ENCODE measurements at regions of chr20 and their contacts with region 1.

Region 1: GRCh38 chr20:17504898-17505635 is 26.1 kb downstream of the BFSP1 start:
- DNase-seq: peak; percentile 71
- H3K4me3 Mint-ChIP-seq: peak overlapping the region; percentile 81
- H3K27ac Mint-ChIP-seq: peak overlapping the region; percentile 86
- H3K4me1 Mint-ChIP-seq: peaks cover 71% of the 10 kb centered on the region
- H3K27me3 Mint-ChIP-seq: peaks cover 4% of the 10 kb centered on the region

Region 2: DNA sequence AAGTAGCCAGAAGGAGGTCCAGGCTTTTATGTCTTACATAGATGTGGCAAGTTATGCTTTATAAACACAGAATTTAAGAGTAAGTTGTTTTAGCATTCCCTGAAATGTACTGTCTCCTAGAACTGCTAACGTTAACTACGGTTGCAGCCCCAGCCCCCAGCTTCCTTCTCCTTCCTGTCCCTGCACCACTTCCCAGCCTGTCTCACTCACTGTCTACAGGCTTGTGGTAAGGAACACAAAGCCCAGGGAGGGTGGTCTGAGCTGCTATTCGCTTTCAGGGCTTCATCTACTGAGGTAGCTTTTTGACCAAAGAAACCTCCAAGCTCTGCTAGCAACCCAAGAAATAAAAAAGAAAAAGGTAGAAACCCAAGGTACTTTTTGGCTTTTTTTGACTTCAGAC is 242.3 kb before region 1 on chr20:
- intact Hi-C with region 1: no loop called
- DNase-seq: no peak
- H3K4me3 Mint-ChIP-seq: no peak overlapping the region
- H3K27ac Mint-ChIP-seq: no peak overlapping the region
- H3K4me1 Mint-ChIP-seq: no peaks in the 10 kb centered on the region
- H3K27me3 Mint-ChIP-seq: no peaks in the 10 kb centered on the region

Region 3: GRCh38 chr20:17536944-17537444 is 31.9 kb after region 1 on chr20:
- intact Hi-C with region 1: loop called (anchors 1 kb)
- DNase-seq: peak; percentile 63
- H3K4me3 Mint-ChIP-seq: no peak overlapping the region
- H3K27ac Mint-ChIP-seq: no peak overlapping the region
- H3K4me1 Mint-ChIP-seq: peaks cover 40% of the 10 kb centered on the region
- H3K27me3 Mint-ChIP-seq: peaks cover 24% of the 10 kb centered on the region

Region 4: GRCh38 chr20:17569616-17570346 is 64.7 kb after region 1 on chr20 and contains the start of gene DSTN:
- intact Hi-C with region 1: loop called (anchors 1 kb)
- DNase-seq: peak; percentile 86
- H3K4me3 Mint-ChIP-seq: peak within 1 kb of the TSS; percentile 94
- H3K27ac Mint-ChIP-seq: peak within 1 kb of the TSS; percentile 93
- H3K4me1 Mint-ChIP-seq: peaks cover 19% of the 10 kb centered on the region
- H3K27me3 Mint-ChIP-seq: peaks cover 6% of the 10 kb centered on the region
- total RNA-seq, gene DSTN: 58.2 and 58.8 TPM in 2 replicates

Region 5: DNA sequence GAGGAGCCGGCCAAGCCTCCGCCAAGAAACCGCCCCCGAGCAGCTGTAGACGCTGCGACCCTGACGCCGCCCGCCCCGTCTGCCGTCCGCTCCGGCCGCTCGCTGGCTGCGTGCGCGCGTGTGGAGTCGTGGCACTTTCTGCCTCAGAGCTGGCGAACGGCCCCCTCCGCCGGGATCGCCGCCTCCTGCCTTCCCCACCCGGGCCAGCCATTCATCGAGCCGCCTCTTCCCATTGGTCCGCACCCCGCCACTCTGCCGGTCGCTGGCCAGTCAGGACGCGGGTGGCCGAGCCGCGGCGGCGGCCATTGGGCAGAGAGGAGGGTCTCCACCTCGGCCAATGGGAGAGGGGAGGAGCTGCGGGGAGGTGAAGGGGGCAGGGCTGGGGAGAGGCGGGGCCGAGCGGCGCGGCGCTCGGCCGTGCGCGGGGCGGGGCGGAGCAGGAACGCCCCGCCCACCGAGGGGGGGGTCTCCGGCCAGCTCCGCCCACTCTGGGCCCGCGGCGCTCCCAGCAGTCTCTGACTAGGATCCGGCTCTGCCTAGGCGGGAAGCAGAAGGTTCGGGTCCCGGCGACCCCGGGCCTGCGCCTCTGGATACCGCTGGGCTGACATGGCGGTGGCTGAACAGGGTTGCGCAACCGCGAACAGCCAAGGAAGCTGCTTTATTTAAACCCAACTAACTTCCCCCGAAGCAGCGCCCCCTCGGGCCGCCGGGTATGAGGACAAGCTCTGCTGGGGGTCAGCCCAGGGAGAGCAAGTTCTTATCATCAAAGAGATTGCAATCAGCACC is 177.2 kb after region 1 on chr20 and contains the start of gene RRBP1:
- intact Hi-C with region 1: loop called (anchors 1 kb)
- DNase-seq: peak; percentile 97
- H3K4me3 Mint-ChIP-seq: peak within 1 kb of the TSS; percentile 88
- H3K27ac Mint-ChIP-seq: peak within 1 kb of the TSS; percentile 91
- H3K4me1 Mint-ChIP-seq: peaks cover 24% of the 10 kb centered on the region
- H3K27me3 Mint-ChIP-seq: peaks cover 26% of the 10 kb centered on the region
- total RNA-seq, gene RRBP1: 54.8 and 56.0 TPM in 2 replicates

Region 6: GRCh38 chr20:17938871-17939619 is 434.0 kb after region 1 on chr20:
- intact Hi-C with region 1: loop called (anchors 1 kb)
- DNase-seq: peak; percentile 26
- H3K4me3 Mint-ChIP-seq: no peak overlapping the region
- H3K27ac Mint-ChIP-seq: peak overlapping the region; percentile 81
- H3K4me1 Mint-ChIP-seq: peaks cover 34% of the 10 kb centered on the region
- H3K27me3 Mint-ChIP-seq: no peaks in the 10 kb centered on the region

Region 7: DNA sequence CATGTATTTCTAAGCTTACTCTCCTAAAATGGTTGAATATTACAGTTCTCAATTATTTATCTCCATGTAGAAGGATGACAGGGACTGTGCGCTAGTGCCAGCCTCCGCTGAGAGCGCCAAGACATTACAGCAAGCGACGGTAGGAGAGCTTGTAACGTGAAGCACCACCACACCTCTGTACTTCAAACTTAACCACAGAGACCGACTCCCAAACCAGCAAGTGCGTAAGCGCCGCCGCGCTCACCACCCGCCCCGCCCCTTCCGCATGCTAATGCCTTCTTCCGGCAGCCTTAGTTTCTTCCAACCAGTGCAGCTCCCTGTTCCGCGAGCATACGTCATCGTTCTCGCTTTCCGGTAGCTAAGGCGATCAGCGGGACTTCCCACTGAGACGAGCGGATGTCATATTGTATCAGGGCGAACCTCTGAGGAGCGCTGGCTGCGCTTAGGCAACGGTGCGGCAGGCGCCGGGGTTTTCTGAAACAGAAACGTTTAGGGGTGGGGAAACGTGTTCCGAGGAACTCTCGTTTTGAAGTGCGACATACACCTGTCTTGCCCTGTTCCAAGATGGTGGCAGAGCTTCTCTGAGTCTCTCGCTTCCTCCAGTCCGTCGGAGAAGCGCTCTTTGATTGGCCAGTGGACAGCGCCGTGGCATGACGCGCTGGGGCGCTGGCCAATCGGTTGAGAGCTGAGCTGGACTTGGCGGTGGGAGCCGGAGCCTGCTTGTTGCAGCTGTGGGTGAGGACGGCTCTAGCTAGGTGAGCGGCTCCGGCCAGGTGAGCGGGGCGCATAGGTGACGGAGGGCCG is 1002.4 kb after region 1 on chr20 and contains the start of gene SEC23B:
- intact Hi-C with region 1: loop called (anchors 10 kb)
- DNase-seq: peak; percentile 97
- H3K4me3 Mint-ChIP-seq: peak within 1 kb of the TSS; percentile 99
- H3K27ac Mint-ChIP-seq: peak within 1 kb of the TSS; percentile 100
- H3K4me1 Mint-ChIP-seq: peaks cover 44% of the 10 kb centered on the region
- H3K27me3 Mint-ChIP-seq: peaks cover 2% of the 10 kb centered on the region
- total RNA-seq, gene SEC23B: 110 and 113 TPM in 2 replicates